Activated CD4-positive, alpha-beta memory T cell treated with anti-CD3 and anti-CD28 coated beads for 36 hours (primary cell): ENCODE measurements at regions of chr5 and their contacts with region 1.

Region 1: GRCh38 chr5:40578501-40579451 is 100.9 kb upstream of the PTGER4 start:
- DNase-seq: peak; percentile 86
- H3K4me3 Mint-ChIP-seq: peak overlapping the region; percentile 48
- H3K27ac Mint-ChIP-seq: peak overlapping the region; percentile 66
- H3K4me1 Mint-ChIP-seq: peaks cover 38% of the 10 kb centered on the region
- H3K27me3 Mint-ChIP-seq: no peaks in the 10 kb centered on the region

Region 2: GRCh38 chr5:40347981-40348725 is 230.6 kb before region 1 on chr5:
- CTCF ChIA-PET with region 1: no interaction called
- POLR2A ChIA-PET with region 1: no interaction called
- intact Hi-C with region 1: no loop called
- DNase-seq: no peak
- H3K4me3 Mint-ChIP-seq: no peak overlapping the region
- H3K27ac Mint-ChIP-seq: no peak overlapping the region
- H3K4me1 Mint-ChIP-seq: peaks cover 8% of the 10 kb centered on the region
- H3K27me3 Mint-ChIP-seq: no peaks in the 10 kb centered on the region

Region 3: GRCh38 chr5:40404613-40405012 is 174.2 kb before region 1 on chr5:
- CTCF ChIA-PET with region 1: no interaction called
- POLR2A ChIA-PET with region 1: no interaction called
- intact Hi-C with region 1: loop called (anchors 1 kb)
- DNase-seq: no peak
- H3K4me3 Mint-ChIP-seq: no peak overlapping the region
- H3K27ac Mint-ChIP-seq: peak overlapping the region; percentile 99
- H3K4me1 Mint-ChIP-seq: peaks cover 90% of the 10 kb centered on the region
- H3K27me3 Mint-ChIP-seq: no peaks in the 10 kb centered on the region

Region 4: GRCh38 chr5:40507095-40507494 is 71.7 kb before region 1 on chr5:
- CTCF ChIA-PET with region 1: no interaction called
- POLR2A ChIA-PET with region 1: no interaction called
- intact Hi-C with region 1: loop called (anchors 5 kb)
- DNase-seq: no peak
- H3K4me3 Mint-ChIP-seq: no peak overlapping the region
- H3K27ac Mint-ChIP-seq: no peak overlapping the region
- H3K4me1 Mint-ChIP-seq: peaks cover 11% of the 10 kb centered on the region
- H3K27me3 Mint-ChIP-seq: no peaks in the 10 kb centered on the region

Region 5: DNA sequence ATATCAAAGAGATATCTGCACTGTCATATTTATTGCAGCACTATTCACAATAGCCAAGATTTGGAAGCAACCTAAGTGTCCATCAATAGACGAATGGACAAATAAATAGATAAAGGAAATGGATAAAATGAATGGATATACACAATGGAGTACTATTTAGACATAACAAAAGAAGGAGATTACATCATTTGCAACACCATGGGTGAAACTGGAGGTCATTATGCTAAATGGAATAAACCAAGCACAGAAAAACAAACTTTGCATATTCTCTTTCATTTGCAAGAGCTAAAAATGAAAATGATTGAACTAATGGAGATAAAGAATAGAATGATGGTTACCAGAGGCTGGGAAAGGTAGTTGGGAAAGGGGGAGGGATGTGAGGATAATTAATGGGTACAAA is 54.1 kb before region 1 on chr5:
- CTCF ChIA-PET with region 1: no interaction called
- POLR2A ChIA-PET with region 1: no interaction called
- intact Hi-C with region 1: no loop called
- DNase-seq: no peak
- H3K4me3 Mint-ChIP-seq: no peak overlapping the region
- H3K27ac Mint-ChIP-seq: no peak overlapping the region
- H3K4me1 Mint-ChIP-seq: peaks cover 8% of the 10 kb centered on the region
- H3K27me3 Mint-ChIP-seq: no peaks in the 10 kb centered on the region

Region 6: DNA sequence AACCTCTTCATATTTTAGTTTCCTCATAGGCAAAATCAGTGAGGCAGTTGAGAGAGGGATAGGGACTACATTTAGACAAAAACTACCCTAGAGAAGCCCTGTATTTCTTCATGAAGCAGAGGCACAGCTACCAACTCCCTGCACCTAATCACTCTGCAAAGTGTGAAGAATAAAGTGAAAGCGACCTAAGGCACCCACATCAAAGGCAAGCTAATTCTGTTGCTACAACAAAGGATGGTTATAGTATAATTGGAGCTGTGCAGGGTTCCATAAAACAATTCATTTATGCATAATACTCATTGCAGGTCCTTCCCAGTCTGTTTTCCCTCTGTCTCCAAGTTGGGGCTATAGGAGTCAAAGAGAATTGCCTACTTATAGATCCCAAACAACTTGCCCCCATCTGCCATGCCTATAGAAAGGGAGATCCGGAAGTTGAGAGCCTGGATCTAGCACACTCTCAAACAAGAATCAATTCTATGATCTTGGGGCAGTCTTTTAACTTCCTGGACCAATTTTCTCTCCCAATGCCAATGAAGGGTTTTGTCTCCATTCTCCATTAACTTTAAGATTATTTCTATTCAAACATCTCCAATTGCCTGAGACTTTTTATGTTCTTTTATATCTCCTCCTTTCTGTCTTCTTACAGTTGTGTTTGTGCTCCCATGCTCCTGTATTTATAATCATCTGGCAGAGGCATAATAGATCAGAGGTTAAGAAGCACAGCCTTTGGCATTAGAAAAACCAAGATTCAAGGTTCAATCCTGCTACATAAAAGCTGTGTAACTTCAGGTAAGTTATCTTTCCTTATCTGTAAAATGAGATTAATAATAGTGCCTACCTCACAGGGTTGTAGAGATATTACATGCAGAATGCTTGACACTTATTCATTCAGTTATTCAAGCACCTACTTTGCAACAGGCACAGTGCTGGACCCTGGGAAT is 45.0 kb after region 1 on chr5:
- CTCF ChIA-PET with region 1: no interaction called
- POLR2A ChIA-PET with region 1: no interaction called
- intact Hi-C with region 1: loop called (anchors 2 kb)
- DNase-seq: no peak
- H3K4me3 Mint-ChIP-seq: no peak overlapping the region
- H3K27ac Mint-ChIP-seq: peak overlapping the region; percentile 26
- H3K4me1 Mint-ChIP-seq: peaks cover 54% of the 10 kb centered on the region
- H3K27me3 Mint-ChIP-seq: no peaks in the 10 kb centered on the region

Region 7: DNA sequence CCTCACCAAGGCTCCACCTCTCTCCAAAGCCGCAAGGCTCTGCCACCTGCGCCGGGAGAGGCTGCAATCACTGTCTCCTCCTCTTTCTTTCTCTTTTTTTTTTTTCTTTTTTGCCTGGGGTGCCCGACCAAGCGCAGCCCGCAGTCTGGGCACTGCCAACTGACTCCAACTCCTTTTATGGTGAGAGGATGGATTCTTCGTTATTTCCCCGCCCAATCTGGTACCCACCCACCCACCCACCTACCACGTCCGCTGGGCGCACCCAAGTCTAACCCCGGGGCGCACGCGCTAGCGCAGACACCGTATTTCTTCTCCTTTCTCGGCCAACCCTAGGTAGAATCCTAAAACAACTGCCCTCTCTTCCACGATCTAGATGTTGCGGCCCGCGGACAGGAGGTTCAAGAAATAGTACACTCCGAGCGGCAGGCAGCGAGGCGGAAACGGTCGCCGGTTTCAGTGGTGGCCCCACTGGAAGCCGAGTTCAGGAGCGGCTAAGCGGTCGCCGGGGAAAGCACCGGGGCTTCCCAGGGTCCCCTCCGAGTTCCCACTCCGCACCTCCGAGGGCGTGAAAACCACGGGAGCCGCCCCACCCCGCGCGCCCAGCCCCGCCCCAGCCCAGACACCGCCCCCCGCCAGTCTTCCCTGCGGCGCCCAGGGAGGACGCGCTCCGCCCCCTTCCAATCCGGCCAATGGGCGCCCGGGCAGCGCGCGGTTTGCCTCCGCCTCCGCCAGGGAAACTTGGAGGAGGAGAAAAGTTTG is 100.6 kb after region 1 on chr5:
- CTCF ChIA-PET with region 1: no interaction called
- POLR2A ChIA-PET with region 1: no interaction called
- intact Hi-C with region 1: loop called (anchors 1 kb)
- DNase-seq: peak; percentile 96
- H3K4me3 Mint-ChIP-seq: peak overlapping the region; percentile 93
- H3K27ac Mint-ChIP-seq: peak overlapping the region; percentile 97
- H3K4me1 Mint-ChIP-seq: peaks cover 37% of the 10 kb centered on the region
- H3K27me3 Mint-ChIP-seq: no peaks in the 10 kb centered on the region